ENCODE measurements at regions of chr15 and their contacts with region 1.

Region 1: DNA sequence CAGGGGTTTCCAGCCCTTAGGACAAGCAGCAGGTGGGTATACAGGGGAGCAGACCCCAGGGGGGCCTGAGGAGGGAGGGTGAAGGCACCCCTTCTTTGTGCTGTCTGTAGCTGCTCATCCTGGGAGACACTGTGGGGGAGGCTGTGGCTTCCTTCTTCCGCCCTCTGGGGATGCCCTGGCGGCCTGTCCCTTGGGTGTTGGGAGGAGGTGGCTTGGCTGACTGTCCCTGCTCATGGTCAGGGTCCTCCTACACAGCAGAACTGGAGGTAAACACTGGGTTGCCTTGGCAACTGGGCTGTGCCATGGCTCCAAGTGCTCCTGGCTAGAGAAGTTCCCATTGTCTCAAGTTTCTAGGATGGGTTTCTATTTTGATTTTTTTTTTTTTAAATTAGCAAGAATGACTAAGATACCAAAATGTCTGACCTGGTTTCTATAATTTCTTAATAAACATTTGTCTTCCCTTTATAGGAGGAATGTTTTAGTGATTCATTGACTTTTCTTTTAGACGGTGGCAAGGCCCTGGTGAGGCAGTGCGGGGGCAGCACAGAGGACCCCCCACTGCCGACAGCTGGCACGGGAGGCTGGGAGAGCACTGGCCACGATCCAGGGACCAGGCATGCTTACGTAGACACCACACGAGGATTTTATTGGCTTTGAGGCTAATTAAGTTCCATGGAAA is 12.4 kb downstream of the KLF13 start:
- DNase-seq: peak in 2 of 3 donors; percentile 43 to 73
- ATAC-seq: peak; percentile 45
- H3K4me3 ChIP-seq: no peak overlapping the region
- H3K4me1 ChIP-seq: peaks cover 85% of the 10 kb centered on the region
- CTCF ChIP-seq: no peak

Region 2: DNA sequence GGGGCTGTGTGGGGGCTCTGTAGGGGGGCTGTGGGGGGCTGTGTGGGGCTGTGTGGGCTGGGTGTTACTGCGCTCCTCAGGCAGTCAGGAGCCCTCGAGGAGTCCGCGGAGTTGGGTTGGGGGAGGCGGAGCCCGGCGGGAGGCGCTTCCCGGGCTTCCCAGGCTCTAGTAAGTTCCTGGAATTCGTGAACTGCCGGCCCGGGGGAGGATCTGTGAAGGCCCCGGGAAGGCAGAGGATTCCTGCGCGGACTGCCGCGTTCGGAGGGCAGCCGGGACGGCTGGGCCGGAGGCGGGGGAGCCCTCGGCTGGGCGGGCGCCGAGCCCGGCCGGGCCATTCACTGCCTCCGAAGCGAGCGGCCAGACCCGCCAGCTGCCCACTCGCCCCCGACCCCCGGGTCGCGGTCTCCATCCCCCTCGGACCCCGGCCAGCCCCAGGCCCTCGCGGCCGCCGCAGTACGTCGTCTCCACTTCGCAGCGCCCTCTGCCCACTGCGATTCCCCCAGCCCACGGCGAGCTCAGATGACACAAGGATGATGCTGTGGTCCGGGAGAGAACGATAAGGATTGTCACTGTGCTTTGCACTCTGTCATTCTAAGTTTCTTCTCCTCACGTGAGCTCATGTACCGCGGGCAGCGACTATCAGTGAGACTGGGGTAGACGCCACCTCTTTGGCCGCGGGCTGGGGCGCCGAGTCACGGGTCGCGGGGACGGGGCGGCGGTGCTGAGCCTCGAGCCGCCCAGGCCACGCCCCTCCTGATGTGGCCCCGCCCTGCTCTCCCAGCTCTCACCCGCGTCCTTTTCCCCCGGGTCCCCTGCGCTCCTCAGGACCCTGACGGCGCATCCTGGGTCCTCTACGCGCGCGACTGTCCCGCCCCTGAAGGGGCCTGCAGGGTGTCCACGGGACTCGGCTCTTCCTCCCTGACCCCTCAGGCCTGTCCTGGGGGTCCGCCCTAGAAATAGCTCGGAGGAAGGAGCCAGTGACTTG is 53.0 kb after region 1 on chr15:
- intact Hi-C with region 1: loop called in 1 of 2 experiments (anchors 10 kb)
- DNase-seq: peak; percentile 90 to 92 (median 92)
- ATAC-seq: peak; percentile 81
- H3K4me3 ChIP-seq: peak overlapping the region; percentile 24
- H3K4me1 ChIP-seq: peaks cover 23% of the 10 kb centered on the region
- CTCF ChIP-seq: no peak